ENCODE measurements at regions of chr22 and their contacts with region 1.

Region 1: GRCh38 chr22:19959043-19959586 is 17.5 kb upstream of the TXNRD2 start:
- DNase-seq: peak; percentile 93

Region 2: GRCh38 chr22:19941365-19942082 is 17.6 kb before region 1 on chr22 and contains the starts of genes COMT and TXNRD2:
- CTCF ChIA-PET with region 1: interaction called, 15 read pairs
- POLR2A ChIA-PET with region 1: interaction called, 16 read pairs
- DNase-seq: peak; percentile 88

Measured in HEK293T (cell line).